MCF 10A (cell line): ENCODE measurements at regions of chr19 and their contacts with region 1.

Region 1: GRCh38 chr19:38559428-38560401 is 58.0 kb downstream of the MAP4K1 start:
- DNase-seq: peak; percentile 87
- H3K4me3 Mint-ChIP-seq: peak overlapping the region; percentile 10
- H3K27ac Mint-ChIP-seq: peak overlapping the region; percentile 82
- H3K4me1 Mint-ChIP-seq: peaks cover 28% of the 10 kb centered on the region
- H3K27me3 Mint-ChIP-seq: no peaks in the 10 kb centered on the region
- CTCF ChIP-seq: no peak

Region 2: GRCh38 chr19:38634757-38635482 is 75.2 kb after region 1 on chr19:
- CTCF ChIA-PET with region 1: interaction called, 8 read pairs
- POLR2A ChIA-PET with region 1: interaction called, 5 read pairs
- intact Hi-C with region 1: loop called (anchors 2 kb)
- DNase-seq: peak; percentile 80
- H3K4me3 Mint-ChIP-seq: no peak overlapping the region
- H3K27ac Mint-ChIP-seq: peak overlapping the region; percentile 24
- H3K4me1 Mint-ChIP-seq: peaks cover 17% of the 10 kb centered on the region
- H3K27me3 Mint-ChIP-seq: no peaks in the 10 kb centered on the region
- CTCF ChIP-seq: peak; percentile 91

Region 3: DNA sequence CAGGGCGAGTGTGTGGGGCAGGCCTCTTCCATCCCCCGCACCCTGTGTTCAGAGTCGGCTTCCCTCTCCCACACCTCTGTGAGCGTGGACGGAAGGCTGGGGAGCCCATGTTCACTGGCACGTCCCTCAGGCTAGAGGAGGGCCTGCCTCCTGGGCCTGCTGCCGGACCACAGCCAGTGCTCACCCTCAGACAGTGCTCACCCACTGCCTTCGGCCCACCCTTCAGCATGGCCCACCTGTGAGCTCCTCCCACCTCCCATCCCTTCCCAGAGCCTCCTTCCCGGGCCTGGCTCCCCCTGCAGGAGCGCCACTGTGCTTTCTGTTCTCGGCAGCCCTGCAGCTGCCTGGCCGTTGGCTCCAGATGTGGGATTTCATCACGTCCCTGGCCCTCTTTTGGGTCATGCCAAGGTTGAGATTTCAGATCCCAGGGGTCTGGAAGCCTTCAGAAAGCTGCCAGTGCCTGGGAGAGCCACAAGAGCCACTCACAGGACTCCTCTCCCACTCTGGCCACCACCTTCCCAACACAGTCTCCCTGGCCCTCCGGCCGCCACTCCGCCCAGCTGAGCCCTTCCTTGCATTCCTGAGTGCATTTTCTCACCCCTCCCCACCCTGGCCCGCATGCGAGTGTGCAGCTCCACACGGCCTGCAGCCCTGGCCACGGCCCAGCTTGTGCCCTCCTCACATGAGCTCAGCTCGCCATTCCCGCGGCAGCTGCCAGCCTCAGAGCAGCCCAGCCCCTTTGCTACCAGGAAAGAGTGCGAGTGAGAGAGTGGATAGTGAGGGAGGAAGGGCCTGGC is 159.2 kb after region 1 on chr19:
- CTCF ChIA-PET with region 1: no interaction called
- POLR2A ChIA-PET with region 1: no interaction called
- intact Hi-C with region 1: loop called (anchors 10 kb)
- DNase-seq: no peak
- H3K4me3 Mint-ChIP-seq: peak overlapping the region; percentile 43
- H3K27ac Mint-ChIP-seq: peak overlapping the region; percentile 75
- H3K4me1 Mint-ChIP-seq: peaks cover 13% of the 10 kb centered on the region
- H3K27me3 Mint-ChIP-seq: no peaks in the 10 kb centered on the region
- CTCF ChIP-seq: peak; percentile 31